Activated CD8-positive, alpha-beta T cell treated with anti-CD3 and anti-CD28 coated beads, Interleukin-2, amount 10 ng/mL, durations not matched to agents 7 days and 5 days (primary cell): ENCODE measurements at regions of chr15 and their contacts with region 1.

Region 1: GRCh38 chr15:60326824-60327654 is 70.7 kb downstream of the ANXA2 start:
- DNase-seq: peak; percentile 60
- ATAC-seq: no peak
- H3K4me3 Mint-ChIP-seq: no peak overlapping the region
- H3K27ac Mint-ChIP-seq: no peak overlapping the region
- H3K4me1 Mint-ChIP-seq: no peaks in the 10 kb centered on the region
- H3K27me3 Mint-ChIP-seq: peaks cover 40% of the 10 kb centered on the region

Region 2: DNA sequence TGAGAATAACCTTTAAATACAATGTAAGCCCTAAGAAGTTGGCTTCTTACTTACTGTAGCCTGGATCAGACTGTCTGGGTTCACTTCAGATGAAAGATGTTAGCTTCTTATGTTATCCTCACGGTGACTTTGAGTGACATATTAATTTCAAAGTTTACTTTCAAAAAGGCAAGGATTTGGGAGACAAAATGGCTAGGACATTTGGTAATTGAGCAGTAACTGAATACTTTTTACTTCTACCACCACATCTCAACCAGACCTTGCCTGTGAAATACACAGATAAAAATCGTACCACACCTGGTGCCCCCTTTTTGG is 601.9 kb before region 1 on chr15:
- CTCF ChIA-PET with region 1: interaction called, 38 read pairs
- POLR2A ChIA-PET with region 1: no interaction called
- DNase-seq: no peak
- ATAC-seq: no peak
- H3K4me3 Mint-ChIP-seq: no peak overlapping the region
- H3K27ac Mint-ChIP-seq: no peak overlapping the region
- H3K4me1 Mint-ChIP-seq: no peaks in the 10 kb centered on the region
- H3K27me3 Mint-ChIP-seq: peaks cover 15% of the 10 kb centered on the region

Region 3: DNA sequence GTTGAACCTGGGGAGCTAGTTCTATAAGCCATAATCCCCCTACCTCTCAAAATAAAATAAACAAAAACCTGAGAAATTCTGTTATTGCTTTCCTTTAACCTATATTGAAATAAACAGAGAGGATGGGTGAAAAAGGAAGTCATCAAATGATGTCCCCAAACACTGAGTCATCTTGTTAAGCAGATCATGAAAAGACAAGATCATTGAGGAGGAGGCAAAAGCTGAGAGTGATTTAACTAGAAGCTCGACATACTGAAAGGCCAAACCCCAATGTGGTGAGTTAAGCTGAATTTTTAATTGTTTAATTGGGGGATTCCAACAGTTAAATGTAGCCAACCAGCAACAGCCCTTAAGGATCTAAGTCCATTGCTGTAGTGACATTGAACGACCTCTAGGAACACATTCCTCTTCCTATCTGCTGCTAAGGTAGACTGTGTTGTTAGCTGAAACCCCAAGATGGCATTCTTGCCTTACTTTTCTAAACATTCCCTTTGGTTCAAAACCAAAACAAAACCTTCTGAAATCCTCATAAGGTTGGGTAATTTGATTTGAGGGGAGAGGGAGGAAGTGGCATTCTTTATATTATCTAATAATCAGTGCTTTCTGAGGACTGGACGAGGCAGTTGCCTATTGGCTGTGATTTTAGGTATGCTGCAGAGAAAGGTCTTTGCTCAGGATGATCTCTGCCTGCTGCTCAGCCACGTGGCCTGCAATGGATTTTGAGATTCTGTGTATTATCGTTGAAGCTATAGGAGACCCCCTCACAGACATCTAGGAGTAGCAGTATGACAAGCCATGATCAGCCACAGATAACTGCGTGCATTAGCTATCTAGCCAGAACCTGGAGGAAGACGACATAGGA is 575.3 kb before region 1 on chr15:
- CTCF ChIA-PET with region 1: interaction called, 33 read pairs
- POLR2A ChIA-PET with region 1: no interaction called
- DNase-seq: no peak
- ATAC-seq: peak; percentile 90
- H3K4me3 Mint-ChIP-seq: no peak overlapping the region
- H3K27ac Mint-ChIP-seq: no peak overlapping the region
- H3K4me1 Mint-ChIP-seq: peaks cover 4% of the 10 kb centered on the region
- H3K27me3 Mint-ChIP-seq: peaks cover 10% of the 10 kb centered on the region

Region 4: GRCh38 chr15:60315878-60316277 is 11.2 kb before region 1 on chr15:
- CTCF ChIA-PET with region 1: interaction called, 10 read pairs
- POLR2A ChIA-PET with region 1: no interaction called
- DNase-seq: no peak
- ATAC-seq: no peak
- H3K4me3 Mint-ChIP-seq: no peak overlapping the region
- H3K27ac Mint-ChIP-seq: no peak overlapping the region
- H3K4me1 Mint-ChIP-seq: no peaks in the 10 kb centered on the region
- H3K27me3 Mint-ChIP-seq: peaks cover 17% of the 10 kb centered on the region

Region 5: DNA sequence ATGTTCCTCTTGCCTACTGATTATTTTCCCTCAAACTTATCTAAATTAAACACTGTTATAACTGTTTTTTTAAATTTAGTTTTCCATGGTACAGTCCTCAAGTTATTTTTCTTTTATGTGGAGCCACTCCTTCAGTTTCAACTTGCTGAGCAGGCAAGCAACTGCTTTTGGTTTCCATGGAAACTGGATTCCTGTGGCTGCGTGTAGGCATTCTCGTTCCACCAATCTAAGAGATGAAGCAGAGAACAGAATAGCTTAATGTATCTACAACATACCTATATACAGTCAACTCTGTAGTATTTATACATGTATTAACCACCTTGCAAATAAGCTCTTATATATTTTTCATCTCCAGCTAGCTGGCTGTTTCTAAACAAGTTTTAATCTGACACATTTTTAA is 96.5 kb after region 1 on chr15:
- CTCF ChIA-PET with region 1: no interaction called
- POLR2A ChIA-PET with region 1: no interaction called
- DNase-seq: no peak
- ATAC-seq: peak; percentile 51
- H3K4me3 Mint-ChIP-seq: no peak overlapping the region
- H3K27ac Mint-ChIP-seq: peak overlapping the region; percentile 9
- H3K4me1 Mint-ChIP-seq: peaks cover 10% of the 10 kb centered on the region
- H3K27me3 Mint-ChIP-seq: no peaks in the 10 kb centered on the region